Activated B cell treated with CpG ODN at 0.5 μM for 24 hours (primary cell): ENCODE measurements at regions of chr16 and their contacts with region 1.

Region 1: DNA sequence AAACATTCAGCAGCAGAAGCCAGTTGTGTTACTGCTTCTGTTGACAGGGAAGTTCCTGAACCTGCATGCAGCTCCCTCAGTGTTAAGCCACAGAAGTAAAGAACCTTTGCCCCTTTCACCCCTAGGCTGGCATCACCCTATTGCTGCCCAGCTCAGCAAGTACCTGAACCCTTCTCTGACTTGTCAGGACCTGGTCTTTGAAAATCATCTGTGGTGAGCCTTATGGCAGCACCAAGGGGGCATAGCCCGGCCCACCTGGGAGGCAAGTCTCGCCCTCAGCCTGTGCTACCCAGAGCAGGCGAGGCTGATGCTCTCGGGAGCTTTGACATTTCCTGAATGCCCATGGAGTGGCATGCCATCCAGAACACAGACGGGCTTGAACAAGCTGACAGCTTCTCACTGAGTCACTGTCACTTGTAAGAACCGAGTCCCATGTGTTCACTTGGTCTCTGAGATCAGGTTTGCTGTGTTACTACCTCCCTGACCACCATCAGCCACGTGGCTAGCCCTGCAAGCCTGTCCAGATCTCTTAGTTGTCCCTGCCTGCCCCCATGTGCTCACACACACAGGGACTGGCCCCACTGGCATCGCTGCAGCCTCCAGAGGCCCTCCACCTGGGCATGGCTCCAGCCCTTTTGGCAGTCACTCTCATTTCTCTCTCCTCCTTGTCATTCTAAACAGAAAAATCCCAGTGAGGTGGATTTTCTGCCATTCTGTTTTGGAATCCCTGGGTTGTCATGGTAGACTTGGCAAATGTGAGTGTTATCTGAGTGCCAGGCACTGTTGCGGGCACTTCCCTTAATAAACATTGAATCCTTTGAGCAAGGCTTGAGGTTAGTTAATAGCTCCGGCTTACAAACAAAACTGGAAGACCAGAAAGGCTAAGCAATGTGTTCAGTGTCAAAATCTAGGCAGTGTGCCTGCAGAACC is 2.9 kb upstream of the CARMIL2 start:
- DNase-seq: no peak
- ATAC-seq: no peak
- H3K4me3 Mint-ChIP-seq: no peak overlapping the region
- H3K27ac Mint-ChIP-seq: no peak overlapping the region
- H3K4me1 Mint-ChIP-seq: peaks cover 17% of the 10 kb centered on the region
- H3K27me3 Mint-ChIP-seq: no peaks in the 10 kb centered on the region
- CTCF ChIP-seq: no peak

Region 2: DNA sequence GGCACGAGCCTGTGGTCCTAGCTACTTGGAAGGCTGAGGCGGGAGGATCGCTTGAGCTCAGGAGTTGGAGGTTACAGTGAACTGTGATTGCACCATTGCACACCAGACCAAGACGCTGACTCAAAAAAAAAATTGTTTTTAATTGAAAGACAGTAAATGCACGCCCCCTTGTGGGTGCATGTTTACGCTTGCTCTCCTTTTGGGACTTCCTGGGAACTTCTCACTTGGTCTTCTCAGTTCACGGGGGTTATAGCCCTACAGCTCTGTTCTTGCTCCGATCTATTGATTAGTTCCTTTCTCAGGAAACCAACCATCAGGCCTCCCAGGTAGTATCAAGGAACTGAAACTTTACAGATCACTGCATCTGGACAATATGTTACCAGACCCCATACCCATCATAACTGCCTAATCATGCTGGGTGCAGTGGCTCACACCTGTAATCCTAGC is 127.6 kb before region 1 on chr16:
- CTCF ChIA-PET with region 1: interaction called, 56 read pairs
- POLR2A ChIA-PET with region 1: interaction called, 11 read pairs
- intact Hi-C with region 1: no loop called
- DNase-seq: no peak
- ATAC-seq: peak; percentile 23
- H3K4me3 Mint-ChIP-seq: peak overlapping the region; percentile 60
- H3K27ac Mint-ChIP-seq: peak overlapping the region; percentile 94
- H3K4me1 Mint-ChIP-seq: peaks cover 73% of the 10 kb centered on the region
- H3K27me3 Mint-ChIP-seq: no peaks in the 10 kb centered on the region
- CTCF ChIP-seq: no peak

Region 3: GRCh38 chr16:67537270-67537635 is 104.8 kb before region 1 on chr16:
- CTCF ChIA-PET with region 1: interaction called, 9 read pairs
- POLR2A ChIA-PET with region 1: interaction called, 12 read pairs
- intact Hi-C with region 1: no loop called
- DNase-seq: no peak
- ATAC-seq: peak; percentile 47
- H3K4me3 Mint-ChIP-seq: peak overlapping the region; percentile 90
- H3K27ac Mint-ChIP-seq: peak overlapping the region; percentile 93
- H3K4me1 Mint-ChIP-seq: peaks cover 82% of the 10 kb centered on the region
- H3K27me3 Mint-ChIP-seq: no peaks in the 10 kb centered on the region
- CTCF ChIP-seq: no peak

Region 4: GRCh38 chr16:67555795-67556212 is 86.2 kb before region 1 on chr16:
- CTCF ChIA-PET with region 1: interaction called, 16 read pairs
- POLR2A ChIA-PET with region 1: interaction called, 4 read pairs
- intact Hi-C with region 1: no loop called
- DNase-seq: no peak
- ATAC-seq: peak; percentile 79
- H3K4me3 Mint-ChIP-seq: peak overlapping the region; percentile 70
- H3K27ac Mint-ChIP-seq: peak overlapping the region; percentile 90
- H3K4me1 Mint-ChIP-seq: peaks cover 76% of the 10 kb centered on the region
- H3K27me3 Mint-ChIP-seq: no peaks in the 10 kb centered on the region
- CTCF ChIP-seq: no peak

Region 5: DNA sequence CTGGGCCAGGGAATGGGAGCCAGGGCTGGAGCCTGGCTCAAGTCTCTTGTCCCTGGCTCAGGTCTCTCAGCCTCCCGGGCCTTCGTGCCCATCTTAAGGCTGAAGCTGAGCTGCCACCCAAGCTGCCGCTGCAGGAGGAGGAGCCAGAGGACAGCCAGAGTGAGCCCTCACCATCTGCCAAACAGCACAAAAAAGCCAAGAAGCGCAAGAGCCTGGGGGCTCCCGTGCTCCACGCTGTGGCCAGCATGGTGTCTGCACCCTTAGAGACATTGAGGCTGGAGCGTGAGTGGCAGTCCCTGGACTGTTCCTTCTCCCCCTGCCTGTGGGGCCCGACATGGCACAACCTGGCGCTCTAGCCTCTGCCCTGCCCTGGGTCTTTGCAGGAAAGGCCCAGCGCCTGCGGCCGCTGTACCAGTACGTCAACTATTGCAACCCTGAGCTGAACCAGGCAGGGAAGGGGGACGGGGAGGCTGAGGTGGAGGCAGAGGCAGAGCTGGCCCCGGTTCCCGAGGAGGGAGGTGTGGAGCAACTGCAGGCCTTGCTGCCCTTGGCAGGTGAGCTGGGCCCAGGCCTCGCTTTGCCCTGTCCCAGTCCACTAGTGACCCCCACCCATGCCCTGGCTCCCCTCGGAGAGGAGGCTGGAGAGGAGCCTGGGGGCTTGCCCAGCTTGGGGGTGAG is 25.9 kb after region 1 on chr16:
- CTCF ChIA-PET with region 1: interaction called, 15 read pairs
- POLR2A ChIA-PET with region 1: interaction called, 5 read pairs
- intact Hi-C with region 1: no loop called
- DNase-seq: peak; percentile 66
- ATAC-seq: peak; percentile 84
- H3K4me3 Mint-ChIP-seq: peak overlapping the region; percentile 87
- H3K27ac Mint-ChIP-seq: peak overlapping the region; percentile 85
- H3K4me1 Mint-ChIP-seq: peaks cover 49% of the 10 kb centered on the region
- H3K27me3 Mint-ChIP-seq: no peaks in the 10 kb centered on the region
- CTCF ChIP-seq: no peak